ENCODE measurements at regions of chr3 and their contacts with region 1.

Region 1: DNA sequence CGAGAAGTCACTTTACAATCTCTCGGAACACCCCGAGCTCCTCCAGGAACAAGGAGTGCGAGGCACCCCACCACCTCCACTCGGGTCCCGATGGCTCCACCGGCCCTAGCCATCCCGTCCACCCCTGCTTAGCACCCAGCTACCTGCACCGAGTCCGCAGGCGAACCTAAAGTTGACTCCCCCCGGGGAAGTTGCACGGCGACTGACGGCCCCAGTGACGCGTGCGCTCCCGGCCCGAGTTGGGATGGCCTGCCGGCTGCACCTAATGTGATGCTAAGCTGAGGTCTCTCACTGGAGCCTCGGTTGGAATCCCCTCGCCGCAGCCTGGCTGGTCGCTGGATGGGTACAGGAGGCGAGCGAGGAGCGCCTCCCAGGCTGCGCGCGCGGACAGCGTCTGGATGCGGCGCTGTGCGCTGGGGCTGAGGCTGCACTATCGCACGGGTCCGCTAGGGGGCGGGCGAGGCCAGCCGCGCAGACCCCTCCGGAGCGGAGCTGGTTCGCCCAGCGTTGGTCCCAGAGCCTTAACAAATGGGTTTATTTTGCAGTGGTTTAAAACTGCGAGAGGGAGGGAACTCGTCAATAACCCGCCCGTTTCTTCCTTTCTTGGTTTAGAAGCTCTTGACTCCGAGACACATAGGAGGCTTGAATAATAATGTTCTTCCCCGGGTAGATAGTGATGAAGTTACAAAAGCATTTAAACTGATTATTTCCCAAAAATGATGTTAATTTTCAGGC is at the start of gene OXTR:
- DNase-seq: peak; percentile 74
- ATAC-seq: peak; percentile 95
- total RNA-seq, gene OXTR: 0.54 TPM

Region 2: DNA sequence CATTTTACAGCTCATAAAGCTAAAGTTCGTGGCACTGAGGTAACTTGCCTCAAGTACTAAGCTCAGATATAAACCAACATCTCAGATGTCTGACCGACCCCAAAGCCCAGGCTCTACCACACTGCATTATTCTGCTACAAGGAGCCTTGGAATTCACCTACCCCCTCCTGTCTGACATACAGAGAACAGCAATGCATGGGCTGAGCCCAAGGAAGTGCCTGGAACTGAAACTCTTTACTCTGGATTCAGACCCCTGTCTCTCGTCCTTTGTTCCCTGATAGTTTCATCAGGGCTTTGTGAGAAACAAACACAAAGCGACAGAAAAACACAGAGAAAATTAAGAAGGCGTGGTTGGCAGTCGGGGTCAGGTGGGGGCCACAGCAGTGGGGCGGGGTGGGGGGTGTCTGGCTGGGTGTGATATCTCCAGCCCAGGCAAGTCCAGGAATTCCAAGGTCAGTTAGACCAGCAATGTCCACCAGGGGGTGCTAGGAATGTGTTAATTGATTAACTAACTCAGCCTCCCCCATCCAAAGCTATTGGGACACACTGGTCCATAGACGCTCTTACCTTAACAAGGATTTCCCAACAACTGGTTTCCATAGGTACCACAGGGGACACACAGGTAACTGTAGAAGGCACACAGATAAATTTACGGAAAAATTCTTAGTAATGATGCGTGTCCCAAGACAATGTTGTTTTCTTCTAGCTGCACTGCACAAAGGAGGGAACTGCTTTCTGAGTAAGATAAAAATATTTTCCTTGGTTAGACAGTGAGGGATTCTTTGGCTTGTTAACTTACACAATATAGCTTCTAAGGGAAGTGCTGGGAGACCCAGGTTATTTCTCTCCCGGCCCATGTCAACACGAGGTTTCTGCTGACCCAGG is 105.8 kb before region 1 on chr3:
- intact Hi-C with region 1: loop called (anchors 10 kb)
- DNase-seq: peak; percentile 49
- ATAC-seq: peak; percentile 35